ENCODE measurements at regions of chr7 and their contacts with region 1.

Region 1: GRCh38 chr7:44490351-44491200 is at the start of gene NUDCD3:
- DNase-seq: peak; percentile 63 to 88 (median 84)
- ATAC-seq: peak; percentile 84
- H3K4me3 ChIP-seq: peak within 1 kb of the TSS; percentile 92
- H3K4me3 Mint-ChIP-seq: peak within 1 kb of the TSS; percentile 85 to 96 (median 90)
- H3K27ac ChIP-seq: peak within 1 kb of the TSS; percentile 98
- H3K27ac Mint-ChIP-seq: peak within 1 kb of the TSS; percentile 90 to 97 (median 93)
- H3K4me1 ChIP-seq: peaks cover 28 to 30% of the 10 kb centered on the region in 2 donors
- H3K4me1 Mint-ChIP-seq: peaks cover 36 to 53% (median 48%) of the 10 kb centered on the region in 7 donors
- H3K27me3 ChIP-seq: peaks cover 0 to 3% of the 10 kb centered on the region in 2 donors
- H3K27me3 Mint-ChIP-seq: peaks cover 0 to 11% (median 3%) of the 10 kb centered on the region in 5 donors
- total RNA-seq, gene NUDCD3: 79.4 to 117 (median 91.0) TPM

Region 2: DNA sequence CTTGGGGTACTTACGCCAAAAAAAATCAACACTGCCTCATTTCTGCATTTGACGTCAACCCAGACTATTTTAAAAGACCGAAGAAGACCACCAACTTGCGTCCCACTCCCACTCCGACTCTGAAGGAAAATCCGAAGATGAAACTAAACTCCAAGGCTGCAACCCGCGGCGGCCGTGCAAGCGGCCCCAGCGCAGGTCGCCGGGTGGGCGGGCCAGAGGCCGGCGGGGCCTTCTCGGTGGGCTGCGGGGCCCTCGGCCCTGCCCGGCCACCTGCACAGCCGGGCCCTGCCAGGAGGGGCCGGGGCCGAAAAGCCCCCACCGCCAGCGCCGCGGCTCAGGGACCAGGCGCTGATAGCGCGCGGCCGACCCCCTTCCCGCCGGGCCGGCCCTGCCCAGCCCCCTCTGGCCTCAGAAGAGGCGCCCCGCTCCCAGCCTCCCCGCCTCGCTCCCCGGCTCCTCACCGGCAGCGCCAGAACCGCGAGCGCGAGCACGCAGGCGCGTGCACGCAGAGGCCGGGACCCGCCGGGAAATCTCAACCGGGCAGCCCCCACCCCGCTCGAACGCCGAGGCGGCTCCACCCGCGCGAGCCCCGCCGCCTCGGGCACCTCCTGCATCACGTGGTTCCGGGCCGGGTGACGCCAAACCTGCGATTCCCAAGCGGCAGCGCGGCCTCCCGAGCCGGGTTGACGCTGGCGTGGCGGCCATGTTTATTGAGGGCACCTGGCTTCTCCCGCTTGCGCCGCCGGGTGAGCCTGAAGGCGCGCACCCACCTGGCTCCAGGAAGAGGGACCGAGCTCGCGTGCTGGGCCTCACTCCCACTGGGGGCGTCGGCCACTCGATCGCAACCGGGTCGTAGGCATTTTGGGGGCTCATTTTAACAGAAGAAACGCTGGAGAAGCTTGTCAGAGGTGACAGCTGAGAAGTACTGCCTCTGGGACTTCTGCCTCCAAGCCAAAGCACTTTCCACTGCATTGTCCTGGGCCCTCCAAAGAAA is 1578.8 kb before region 1 on chr7 and contains the start of gene C7orf25:
- CTCF ChIA-PET with region 1: no interaction called
- POLR2A ChIA-PET with region 1: no interaction called
- intact Hi-C with region 1: loop called in 1 of 2 experiments (anchors 2 kb)
- DNase-seq: peak; percentile 92 to 97 (median 95)
- ATAC-seq: peak; percentile 95
- H3K4me3 ChIP-seq: peak within 1 kb of the TSS; percentile 64
- H3K4me3 Mint-ChIP-seq: peak within 1 kb of the TSS; percentile 81 to 98 (median 90)
- H3K27ac ChIP-seq: peak within 1 kb of the TSS; percentile 82
- H3K27ac Mint-ChIP-seq: peak within 1 kb of the TSS; percentile 81 to 95 (median 92)
- H3K4me1 ChIP-seq: peaks cover 9 to 18% of the 10 kb centered on the region in 2 donors
- H3K4me1 Mint-ChIP-seq: peaks cover 28 to 73% (median 53%) of the 10 kb centered on the region in 7 donors
- H3K27me3 ChIP-seq: no peaks in the 10 kb centered on the region
- H3K27me3 Mint-ChIP-seq: no peaks in the 10 kb centered on the region
- total RNA-seq, gene C7orf25: 2.3 to 10.9 (median 5.3) TPM

Region 3: DNA sequence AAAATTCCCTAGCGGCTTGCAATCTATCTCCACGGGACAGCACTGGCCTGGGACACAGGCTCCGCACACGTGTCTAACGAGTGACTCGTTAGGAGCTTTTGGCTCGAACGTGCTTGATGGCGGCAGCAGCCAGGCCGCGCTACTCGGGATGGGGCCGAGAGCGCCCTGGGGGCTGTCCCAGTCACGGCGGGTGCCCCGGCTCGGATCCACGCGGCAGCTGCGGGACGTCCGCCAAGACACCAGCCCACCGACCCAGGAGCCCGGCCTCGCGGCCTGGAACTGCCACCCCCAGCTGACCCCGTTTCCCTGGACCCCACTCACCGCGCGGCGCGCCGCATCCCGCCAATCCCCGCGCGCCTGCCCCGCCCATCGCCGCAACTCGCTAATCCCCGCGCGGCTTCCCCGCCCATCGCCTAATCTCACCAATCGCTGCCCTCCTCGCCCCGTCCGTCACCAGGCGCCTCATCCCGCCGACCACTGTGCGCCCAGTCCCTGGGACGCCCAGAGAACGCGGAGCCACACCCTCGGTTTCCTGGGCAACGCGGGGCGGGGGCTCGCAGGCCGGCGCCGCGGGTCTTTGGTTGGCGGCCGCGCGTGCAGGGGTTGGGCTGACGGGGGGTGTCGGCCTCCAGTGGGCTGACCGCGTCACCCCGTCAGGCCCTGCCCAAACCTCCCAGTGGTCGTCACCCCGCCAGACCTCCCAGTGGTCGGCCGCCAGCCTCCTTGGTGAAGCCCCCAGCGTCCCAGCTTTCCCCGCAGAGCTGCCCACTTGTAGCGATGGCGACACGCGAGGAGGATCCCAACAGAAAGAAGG is 367.2 kb before region 1 on chr7 and contains the start of gene POLD2:
- CTCF ChIA-PET with region 1: no interaction called
- POLR2A ChIA-PET with region 1: no interaction called
- intact Hi-C with region 1: loop called in 1 of 2 experiments (anchors 1 kb)
- DNase-seq: peak; percentile 88 to 99 (median 94)
- ATAC-seq: peak; percentile 99
- H3K4me3 ChIP-seq: peak within 1 kb of the TSS; percentile 89
- H3K4me3 Mint-ChIP-seq: peak within 1 kb of the TSS; percentile 82 to 97 (median 93)
- H3K27ac ChIP-seq: peak within 1 kb of the TSS; percentile 74
- H3K27ac Mint-ChIP-seq: peak within 1 kb of the TSS; percentile 40 to 96 (median 87)
- H3K4me1 ChIP-seq: peaks cover 8 to 9% of the 10 kb centered on the region in 2 donors
- H3K4me1 Mint-ChIP-seq: peaks cover 18 to 40% (median 39%) of the 10 kb centered on the region in 7 donors
- H3K27me3 ChIP-seq: no peaks in the 10 kb centered on the region
- H3K27me3 Mint-ChIP-seq: peaks cover 0 to 23% (median 0%) of the 10 kb centered on the region in 5 donors
- total RNA-seq, gene POLD2: 55.1 to 118 (median 69.2) TPM

Region 4: GRCh38 chr7:44460325-44460724 is 30.3 kb before region 1 on chr7:
- CTCF ChIA-PET with region 1: no interaction called
- POLR2A ChIA-PET with region 1: interaction called, 20 read pairs
- intact Hi-C with region 1: loop called (anchors 1 kb)
- DNase-seq: peak in 8 of 9 donors; percentile 37 to 89 (median 85)
- ATAC-seq: peak; percentile 98
- H3K4me3 ChIP-seq: peak overlapping the region; percentile 28
- H3K4me3 Mint-ChIP-seq: peak overlapping the region; percentile 57 to 91 (median 72)
- H3K27ac ChIP-seq: peak overlapping the region; percentile 62
- H3K27ac Mint-ChIP-seq: peak overlapping the region; percentile 16 to 96 (median 79)
- H3K4me1 ChIP-seq: peaks cover 36 to 55% of the 10 kb centered on the region in 2 donors
- H3K4me1 Mint-ChIP-seq: peaks cover 48 to 96% (median 85%) of the 10 kb centered on the region in 7 donors
- H3K27me3 ChIP-seq: no peaks in the 10 kb centered on the region
- H3K27me3 Mint-ChIP-seq: no peaks in the 10 kb centered on the region

Region 5: GRCh38 chr7:44573464-44574286 is 83.1 kb after region 1 on chr7 and contains the start of gene DDX56:
- CTCF ChIA-PET with region 1: no interaction called
- POLR2A ChIA-PET with region 1: interaction called, 42 read pairs
- intact Hi-C with region 1: loop called (anchors 1 to 2 kb)
- DNase-seq: peak; percentile 72 to 90 (median 87)
- ATAC-seq: peak; percentile 97
- H3K4me3 ChIP-seq: peak within 1 kb of the TSS; percentile 95
- H3K4me3 Mint-ChIP-seq: peak within 1 kb of the TSS; percentile 91 to 98 (median 95)
- H3K27ac ChIP-seq: peak within 1 kb of the TSS; percentile 95
- H3K27ac Mint-ChIP-seq: peak within 1 kb of the TSS; percentile 92 to 99 (median 98)
- H3K4me1 ChIP-seq: peaks cover 19 to 27% of the 10 kb centered on the region in 2 donors
- H3K4me1 Mint-ChIP-seq: peaks cover 20 to 48% (median 33%) of the 10 kb centered on the region in 7 donors
- H3K27me3 ChIP-seq: no peaks in the 10 kb centered on the region
- H3K27me3 Mint-ChIP-seq: no peaks in the 10 kb centered on the region
- total RNA-seq, gene DDX56: 82.8 to 124 (median 100.0) TPM

Region 6: GRCh38 chr7:44638611-44639557 is 148.3 kb after region 1 on chr7:
- CTCF ChIA-PET with region 1: no interaction called
- POLR2A ChIA-PET with region 1: no interaction called
- intact Hi-C with region 1: loop called in 1 of 2 experiments (anchors 2 kb)
- DNase-seq: peak; percentile 15 to 81 (median 40)
- ATAC-seq: peak; percentile 83
- H3K4me3 ChIP-seq: peak overlapping the region; percentile 28
- H3K4me3 Mint-ChIP-seq: peak overlapping the region; percentile 57 to 95 (median 78)
- H3K27ac ChIP-seq: peak overlapping the region; percentile 79
- H3K27ac Mint-ChIP-seq: peak overlapping the region; percentile 92 to 100 (median 98)
- H3K4me1 ChIP-seq: peaks cover 37 to 77% of the 10 kb centered on the region in 2 donors
- H3K4me1 Mint-ChIP-seq: peaks cover 46 to 80% (median 57%) of the 10 kb centered on the region in 7 donors
- H3K27me3 ChIP-seq: no peaks in the 10 kb centered on the region
- H3K27me3 Mint-ChIP-seq: no peaks in the 10 kb centered on the region

Region 7: DNA sequence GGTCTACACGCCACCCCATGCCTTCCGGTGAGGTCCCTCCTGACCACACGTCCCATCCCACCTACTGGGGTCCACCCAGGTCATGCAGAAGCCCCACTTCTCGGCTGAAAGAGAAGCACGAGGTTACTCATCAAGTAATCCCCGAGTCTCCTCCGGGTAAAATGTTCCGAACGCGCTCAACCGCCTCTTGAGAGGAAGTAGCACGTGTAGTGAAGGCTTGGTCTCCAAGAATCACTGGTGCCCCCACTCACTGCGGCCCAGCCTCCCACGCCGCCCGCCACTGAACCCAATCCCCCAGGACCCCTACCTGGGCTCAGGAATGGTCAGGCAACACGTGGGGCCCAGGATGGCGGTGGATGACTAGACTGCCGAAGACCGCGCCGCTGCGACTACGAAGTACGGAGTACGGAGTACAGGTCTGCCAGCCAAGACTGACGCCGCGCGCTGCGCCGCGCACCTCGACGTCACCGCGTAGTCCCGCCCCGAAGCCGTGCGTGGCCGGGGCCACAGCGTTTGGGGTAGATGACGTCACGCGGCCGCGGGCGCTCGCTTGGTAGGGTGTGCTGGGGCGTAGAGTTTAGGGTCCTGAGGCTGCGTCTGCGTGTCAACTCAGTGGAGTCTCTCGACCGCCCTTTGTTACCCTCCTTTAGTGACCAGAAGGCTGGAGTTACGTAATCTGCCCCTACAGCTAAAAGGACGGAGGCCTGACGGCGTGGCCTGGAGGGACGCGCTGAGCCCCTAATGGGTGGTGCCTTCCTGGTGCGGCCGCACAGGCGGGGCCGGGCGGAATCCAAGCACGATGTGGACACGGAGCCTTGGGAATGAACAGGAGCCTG is 495.9 kb after region 1 on chr7:
- CTCF ChIA-PET with region 1: no interaction called
- POLR2A ChIA-PET with region 1: no interaction called
- intact Hi-C with region 1: loop called in 1 of 2 experiments (anchors 2 kb)
- DNase-seq: peak; percentile 93 to 97 (median 96)
- ATAC-seq: peak; percentile 98
- H3K4me3 ChIP-seq: peak overlapping the region; percentile 92
- H3K4me3 Mint-ChIP-seq: peak overlapping the region; percentile 94 to 100 (median 97)
- H3K27ac ChIP-seq: peak overlapping the region; percentile 97
- H3K27ac Mint-ChIP-seq: peak overlapping the region; percentile 97 to 99 (median 98)
- H3K4me1 ChIP-seq: peaks cover 25 to 33% of the 10 kb centered on the region in 2 donors
- H3K4me1 Mint-ChIP-seq: peaks cover 24 to 66% (median 56%) of the 10 kb centered on the region in 7 donors
- H3K27me3 ChIP-seq: no peaks in the 10 kb centered on the region
- H3K27me3 Mint-ChIP-seq: no peaks in the 10 kb centered on the region

Region 8: GRCh38 chr7:45052011-45052410 is 561.4 kb after region 1 on chr7:
- CTCF ChIA-PET with region 1: no interaction called
- POLR2A ChIA-PET with region 1: no interaction called
- intact Hi-C with region 1: no loop called
- DNase-seq: no peak
- ATAC-seq: no peak
- H3K4me3 ChIP-seq: no peak overlapping the region
- H3K4me3 Mint-ChIP-seq: peak overlapping the region in 1 of 10 donors; percentile 7
- H3K27ac ChIP-seq: no peak overlapping the region
- H3K27ac Mint-ChIP-seq: peak overlapping the region in 7 of 9 donors; percentile 8 to 87 (median 54)
- H3K4me1 ChIP-seq: peaks cover 3 to 23% of the 10 kb centered on the region in 2 donors
- H3K4me1 Mint-ChIP-seq: peaks cover 44 to 81% (median 73%) of the 10 kb centered on the region in 7 donors
- H3K27me3 ChIP-seq: no peaks in the 10 kb centered on the region
- H3K27me3 Mint-ChIP-seq: no peaks in the 10 kb centered on the region

Measured in naive thymus-derived CD4-positive, alpha-beta T cell (primary cell).